IMR-90 (cell line): ENCODE measurements at regions of chr16 and their contacts with region 1.

Region 1: DNA sequence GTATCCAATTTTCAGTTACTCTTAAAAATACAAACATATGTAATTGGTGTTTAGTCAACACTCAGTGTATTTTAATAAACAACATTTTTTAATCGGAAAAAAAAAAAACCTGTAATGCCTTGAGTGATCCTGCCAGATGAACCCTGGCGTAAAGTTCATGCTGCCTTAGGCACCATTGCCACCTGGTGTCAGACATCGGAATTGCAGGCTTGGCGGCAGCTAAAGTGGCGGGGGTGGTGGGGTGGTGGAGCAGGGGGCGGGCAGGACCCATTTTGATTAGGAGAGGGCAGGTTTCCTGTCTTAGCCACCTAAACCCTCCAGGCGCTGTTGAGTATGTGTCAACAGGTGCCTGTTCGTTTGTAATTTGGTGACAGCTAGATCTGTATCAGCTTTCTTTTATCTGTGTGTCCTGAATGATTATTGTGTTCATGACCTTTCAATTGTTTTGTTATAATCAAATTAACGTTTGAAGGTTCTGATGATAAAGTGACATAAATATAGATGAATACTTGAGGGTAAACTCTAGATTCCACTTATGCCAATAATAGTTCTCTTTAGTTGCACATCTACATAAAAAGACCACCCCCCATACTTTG is 588.7 kb downstream of the CDH13 start:
- DNase-seq: peak; percentile 44
- ATAC-seq: peak; percentile 79
- H3K4me3 ChIP-seq: no peak overlapping the region
- H3K27ac ChIP-seq: no peak overlapping the region
- H3K4me1 ChIP-seq: no peaks in the 10 kb centered on the region
- H3K27me3 ChIP-seq: no peaks in the 10 kb centered on the region
- CTCF ChIP-seq: peak; percentile 80
- POLR2A ChIP-seq: no peak
- RAD21 ChIP-seq: peak; percentile 90

Region 2: GRCh38 chr16:82603784-82604411 is 611.6 kb before region 1 on chr16:
- CTCF ChIA-PET with region 1: interaction called, 3 read pairs
- POLR2A ChIA-PET with region 1: no interaction called
- dilution Hi-C with region 1: no loop called
- in situ Hi-C with region 1: no loop called
- intact Hi-C with region 1: loop called (anchors 1 kb)
- DNase-seq: peak; percentile 73
- ATAC-seq: peak; percentile 98
- H3K4me3 ChIP-seq: no peak overlapping the region
- H3K27ac ChIP-seq: no peak overlapping the region
- H3K4me1 ChIP-seq: no peaks in the 10 kb centered on the region
- H3K27me3 ChIP-seq: peaks cover 17% of the 10 kb centered on the region
- CTCF ChIP-seq: peak; percentile 81
- POLR2A ChIP-seq: no peak
- RAD21 ChIP-seq: peak; percentile 82

Region 3: GRCh38 chr16:82639666-82640336 is 575.7 kb before region 1 on chr16:
- CTCF ChIA-PET with region 1: no interaction called
- POLR2A ChIA-PET with region 1: no interaction called
- dilution Hi-C with region 1: no loop called
- in situ Hi-C with region 1: no loop called
- intact Hi-C with region 1: loop called (anchors 1 kb)
- DNase-seq: peak; percentile 58
- ATAC-seq: peak; percentile 74
- H3K4me3 ChIP-seq: no peak overlapping the region
- H3K27ac ChIP-seq: no peak overlapping the region
- H3K4me1 ChIP-seq: peaks cover 17% of the 10 kb centered on the region
- H3K27me3 ChIP-seq: no peaks in the 10 kb centered on the region
- CTCF ChIP-seq: peak; percentile 74
- POLR2A ChIP-seq: no peak
- RAD21 ChIP-seq: peak; percentile 62

Region 4: GRCh38 chr16:82888591-82889001 is 326.9 kb before region 1 on chr16:
- CTCF ChIA-PET with region 1: no interaction called
- POLR2A ChIA-PET with region 1: no interaction called
- dilution Hi-C with region 1: no loop called
- in situ Hi-C with region 1: no loop called
- intact Hi-C with region 1: loop called (anchors 10 kb)
- DNase-seq: peak; percentile 95
- ATAC-seq: peak; percentile 92
- H3K4me3 ChIP-seq: peak overlapping the region; percentile 9; the same call in 1 of the 2 replicates
- H3K27ac ChIP-seq: peak overlapping the region; percentile 59; the same call in 1 of the 2 replicates
- H3K4me1 ChIP-seq: peaks cover 7% of the 10 kb centered on the region
- H3K27me3 ChIP-seq: no peaks in the 10 kb centered on the region
- CTCF ChIP-seq: no peak
- POLR2A ChIP-seq: no peak
- RAD21 ChIP-seq: no peak